ENCODE measurements at regions of chr13 and their contacts with region 1.

Region 1: GRCh38 chr13:110509971-110510786 is 51.3 kb downstream of the RAB20 start:
- DNase-seq: no peak
- H3K4me3 ChIP-seq: no peak overlapping the region
- H3K27ac ChIP-seq: peak overlapping the region in 1 of 2 donors; percentile 7
- H3K4me1 ChIP-seq: peaks cover 7 to 15% of the 10 kb centered on the region in 2 donors
- H3K27me3 ChIP-seq: no peaks in the 10 kb centered on the region
- CTCF ChIP-seq: no peak

Region 2: GRCh38 chr13:110080187-110080586 is 430.0 kb before region 1 on chr13:
- intact Hi-C with region 1: no loop called
- DNase-seq: no peak
- H3K4me3 ChIP-seq: no peak overlapping the region
- H3K27ac ChIP-seq: no peak overlapping the region
- H3K4me1 ChIP-seq: no peaks in the 10 kb centered on the region
- H3K27me3 ChIP-seq: no peaks in the 10 kb centered on the region
- CTCF ChIP-seq: no peak

Region 3: DNA sequence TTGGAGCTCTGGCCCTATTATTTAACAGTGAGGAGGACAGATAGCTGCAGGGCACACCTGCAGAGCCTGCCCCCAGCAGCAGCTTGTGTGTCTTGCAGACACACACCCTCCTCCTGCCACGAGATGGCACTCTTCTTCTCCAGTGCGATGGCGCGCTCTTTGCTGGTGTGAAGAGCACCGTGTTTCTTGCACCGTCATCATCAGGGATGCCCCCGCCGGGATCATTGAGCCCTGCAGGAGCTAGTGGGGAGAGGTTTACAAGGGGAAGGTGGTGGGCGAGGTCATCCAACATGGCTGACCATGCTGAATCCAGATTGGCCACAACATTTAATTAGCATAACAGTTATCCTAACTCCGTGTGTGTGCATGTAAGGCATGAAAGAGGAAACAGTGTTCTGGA is 54.2 kb before region 1 on chr13:
- intact Hi-C with region 1: loop called (anchors 5 kb)
- DNase-seq: peak in 1 of 2 donors; percentile 84
- H3K4me3 ChIP-seq: no peak overlapping the region
- H3K27ac ChIP-seq: no peak overlapping the region
- H3K4me1 ChIP-seq: no peaks in the 10 kb centered on the region
- H3K27me3 ChIP-seq: no peaks in the 10 kb centered on the region
- CTCF ChIP-seq: peak; percentile 67 to 75 (median 67)

Measured in ascending aorta (tissue), 2 donors.